Common myeloid progenitor, CD34-positive (primary cell): ENCODE measurements at regions of chr1 and their contacts with region 1.

Region 1: DNA sequence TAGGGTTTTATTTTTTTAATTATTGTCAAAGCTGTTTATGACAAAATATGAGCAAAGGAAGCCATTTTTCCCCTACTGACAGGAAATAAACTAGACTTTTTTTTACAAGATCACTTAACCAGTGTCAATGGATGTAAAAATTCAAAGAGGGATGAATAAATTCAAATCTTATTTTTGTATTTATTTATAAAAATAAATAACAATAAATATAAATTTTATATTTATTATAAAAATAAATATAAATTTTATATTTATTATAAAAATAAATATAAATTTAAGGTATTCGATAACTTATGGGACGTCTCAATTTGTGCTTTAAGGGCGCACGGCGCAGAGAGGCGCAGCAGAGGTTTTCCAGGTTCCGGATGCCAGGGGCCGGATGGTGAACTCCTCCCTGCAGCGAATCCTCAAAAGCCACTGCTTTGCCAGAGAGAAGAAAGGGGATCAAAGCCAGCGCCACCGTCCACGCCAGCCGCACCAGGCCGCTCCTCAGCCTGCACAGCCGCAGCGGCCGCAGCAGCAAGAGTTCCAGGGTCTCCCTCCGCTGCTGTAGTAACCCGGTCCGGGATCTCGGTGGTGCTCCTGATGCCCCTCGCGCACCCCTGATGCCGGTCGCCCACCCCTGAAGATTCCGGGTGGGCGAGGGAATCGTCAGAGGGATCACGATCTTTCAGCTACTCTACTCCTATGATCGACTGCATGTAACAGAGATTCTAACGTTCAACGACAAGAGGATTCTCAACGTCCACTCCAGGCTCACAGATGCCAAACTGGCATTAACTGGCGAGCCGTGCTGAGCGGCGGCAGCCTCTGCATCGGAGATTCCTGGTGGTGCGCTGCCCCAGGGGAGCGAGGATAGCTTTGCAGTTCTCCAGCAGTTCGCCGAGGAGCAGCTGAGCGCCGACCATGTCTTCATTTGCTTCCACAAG is 28.5 kb upstream of the RLF start:
- DNase-seq: no peak
- H3K4me3 ChIP-seq: no peak overlapping the region
- H3K27ac ChIP-seq: no peak overlapping the region
- H3K4me1 ChIP-seq: peaks cover 0 to 11% (median 9%) of the 10 kb centered on the region in 4 experiments
- H3K27me3 ChIP-seq: no peaks in the 10 kb centered on the region

Region 2: DNA sequence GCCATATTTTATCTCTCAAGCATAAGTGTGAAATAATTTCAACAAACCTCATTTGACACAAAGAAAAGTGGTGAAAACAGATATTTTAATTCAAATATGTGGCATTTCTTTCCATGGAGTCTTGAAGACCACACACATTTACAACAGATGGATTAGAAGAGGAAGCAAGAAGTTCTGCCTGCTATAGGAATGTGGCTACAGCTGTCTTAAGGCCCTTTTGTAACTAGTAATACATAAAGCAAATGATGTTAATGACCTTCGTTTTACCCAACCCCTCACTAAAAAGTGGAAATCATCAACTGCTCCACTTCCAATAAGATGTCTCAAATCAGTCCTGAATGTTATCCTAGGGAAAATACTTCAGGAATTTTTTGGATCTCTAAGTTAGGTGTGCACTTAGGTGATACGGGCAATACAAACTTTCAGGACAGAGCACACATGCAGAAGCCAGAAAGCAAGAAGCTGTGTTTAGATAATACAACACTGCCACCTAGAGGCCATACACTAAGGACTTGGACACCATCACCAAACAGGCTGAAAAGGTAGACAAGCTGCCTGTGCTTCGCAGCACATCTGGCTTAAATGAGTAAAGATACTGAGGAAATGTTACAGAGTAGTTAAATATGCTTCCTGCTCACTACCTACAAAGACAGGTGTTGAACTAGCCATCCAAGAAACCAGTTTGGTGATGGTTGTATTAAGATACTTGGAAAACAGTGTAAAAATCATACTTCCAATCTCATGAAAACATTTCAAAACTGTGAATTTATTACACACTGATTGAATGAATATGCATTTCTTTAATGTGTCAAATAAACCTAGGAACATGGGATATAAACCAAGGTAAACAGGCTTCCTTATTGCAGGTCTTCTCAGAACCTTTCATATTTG is 1297.5 kb before region 1 on chr1:
- CTCF ChIA-PET with region 1: no interaction called
- POLR2A ChIA-PET with region 1: no interaction called
- DNase-seq: peak; percentile 87 to 93 (median 91)
- H3K4me3 ChIP-seq: peak overlapping the region in 1 of 7 experiments; percentile 56
- H3K27ac ChIP-seq: no peak overlapping the region
- H3K4me1 ChIP-seq: peaks cover 19 to 28% (median 25%) of the 10 kb centered on the region in 4 experiments
- H3K27me3 ChIP-seq: peaks cover 0 to 3% (median 0%) of the 10 kb centered on the region in 5 experiments

Region 3: DNA sequence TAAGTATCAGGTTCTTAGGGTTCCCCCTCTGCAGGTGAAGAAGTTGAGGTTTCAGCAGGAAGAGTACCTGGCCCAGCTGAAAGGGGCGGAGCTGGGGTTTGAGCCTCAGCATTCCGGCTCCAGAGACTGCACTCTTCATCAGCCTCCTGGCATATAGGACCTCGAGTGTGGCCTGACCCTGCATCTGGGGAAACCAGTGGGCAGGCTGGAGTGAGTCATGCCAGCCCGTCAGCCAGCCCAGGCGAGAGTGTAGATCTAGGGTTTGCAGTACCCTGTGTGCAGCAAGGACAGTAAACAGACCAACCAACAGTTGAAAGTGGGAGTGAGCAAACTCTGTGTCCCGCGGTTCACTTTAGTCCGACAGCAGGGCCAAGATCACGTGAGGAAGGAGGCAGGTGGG is 163.6 kb before region 1 on chr1:
- CTCF ChIA-PET with region 1: no interaction called
- POLR2A ChIA-PET with region 1: no interaction called
- DNase-seq: no peak
- H3K4me3 ChIP-seq: no peak overlapping the region
- H3K27ac ChIP-seq: no peak overlapping the region
- H3K4me1 ChIP-seq: peaks cover 0 to 2% (median 0%) of the 10 kb centered on the region in 4 experiments
- H3K27me3 ChIP-seq: no peaks in the 10 kb centered on the region

Region 4: DNA sequence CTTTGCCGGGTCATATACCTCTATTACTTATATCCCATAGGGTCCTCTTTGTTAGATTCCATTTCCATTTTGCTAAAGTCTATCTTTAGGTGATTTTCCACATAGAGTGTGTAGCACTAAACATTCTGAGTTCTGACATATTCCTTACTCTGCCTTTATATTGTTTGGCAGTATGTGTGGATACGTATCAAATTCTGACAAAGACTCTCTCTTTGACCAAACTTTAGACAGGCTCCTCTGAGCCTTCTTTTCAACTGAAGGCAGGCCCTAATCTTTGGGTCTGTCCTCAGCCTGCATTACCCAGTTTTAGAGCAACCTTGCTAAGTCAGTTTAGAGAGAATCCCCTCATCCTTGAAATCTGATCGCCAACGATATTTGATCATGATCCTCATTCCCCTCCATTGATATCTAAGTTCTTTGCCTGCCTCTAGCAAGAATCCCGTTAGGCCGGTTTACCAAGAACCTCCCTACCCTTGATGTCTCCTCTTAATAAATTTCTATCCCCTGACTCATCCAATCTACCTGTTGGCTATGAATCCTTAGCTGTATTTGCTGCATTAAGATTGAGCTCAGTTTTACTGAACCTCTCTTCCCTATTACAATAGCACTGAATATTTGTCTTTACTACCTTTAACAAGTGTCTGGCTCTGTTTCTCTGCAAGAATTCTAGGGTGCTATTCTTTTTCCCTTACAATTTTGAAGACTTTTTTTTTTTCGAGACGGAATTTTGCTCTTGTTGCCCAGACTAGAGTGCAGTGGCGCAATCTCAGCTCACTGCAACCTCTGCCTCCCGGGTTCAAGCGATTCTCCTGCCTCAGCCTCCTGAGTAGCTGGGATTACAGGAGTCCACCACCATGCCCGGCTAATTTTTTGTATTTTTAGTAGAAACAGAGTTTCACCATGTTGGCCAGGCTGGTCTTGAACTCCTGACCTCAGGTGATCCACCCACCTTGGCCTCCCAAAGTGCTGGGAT is 25.1 kb before region 1 on chr1:
- CTCF ChIA-PET with region 1: interaction called, 6 read pairs
- POLR2A ChIA-PET with region 1: interaction called, 10 read pairs
- DNase-seq: no peak
- H3K4me3 ChIP-seq: no peak overlapping the region
- H3K27ac ChIP-seq: no peak overlapping the region
- H3K4me1 ChIP-seq: no peaks in the 10 kb centered on the region
- H3K27me3 ChIP-seq: no peaks in the 10 kb centered on the region